ENCODE measurements at regions of chr12 and their contacts with region 1.

Region 1: DNA sequence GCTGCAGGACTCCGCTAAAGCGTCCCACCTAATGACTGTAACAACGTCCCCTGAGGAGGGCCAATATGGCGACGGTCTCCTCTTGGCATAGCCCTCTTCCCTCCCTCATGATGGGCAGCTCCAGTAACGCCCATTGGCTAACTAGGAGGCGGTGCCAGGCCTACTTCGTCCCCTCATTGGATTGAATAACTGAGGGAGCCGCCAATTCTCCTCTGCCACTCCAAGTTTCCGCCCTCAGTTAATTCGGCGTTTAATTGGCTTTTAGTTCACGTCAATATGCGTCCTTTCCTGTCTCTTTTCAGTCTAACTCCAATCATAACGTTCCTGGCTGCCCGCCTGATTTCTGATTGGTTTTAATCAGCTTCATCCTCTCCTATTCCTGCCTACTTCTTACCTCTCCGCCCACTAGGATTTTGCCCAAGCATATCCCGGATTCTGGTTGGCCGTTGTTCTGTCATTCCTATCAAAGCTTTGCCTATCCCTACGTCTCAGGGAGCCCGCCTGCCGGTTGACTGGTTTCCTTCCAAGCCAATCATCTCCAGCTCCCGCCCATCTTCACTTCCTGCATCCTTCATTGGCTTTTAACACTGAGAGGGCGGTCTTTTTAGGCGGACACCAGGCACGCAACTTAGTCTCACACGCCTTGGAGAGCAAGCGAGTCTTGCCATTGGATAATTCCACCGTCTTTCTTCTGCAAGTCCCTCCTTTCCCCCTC is 430 bp upstream of the SP1 start:
- DNase-seq: peak; percentile 98 to 100 (median 99)
- H3K4me3 ChIP-seq: peak overlapping the region; percentile 77
- H3K27ac ChIP-seq: peak overlapping the region; percentile 91 to 98
- H3K4me1 ChIP-seq: peaks cover 19% of the 10 kb centered on the region
- H3K27me3 ChIP-seq: no peaks in the 10 kb centered on the region
- CTCF ChIP-seq: no peak
- EP300 ChIP-seq: no peak
- POLR2A ChIP-seq: peak; percentile 96

Region 2: DNA sequence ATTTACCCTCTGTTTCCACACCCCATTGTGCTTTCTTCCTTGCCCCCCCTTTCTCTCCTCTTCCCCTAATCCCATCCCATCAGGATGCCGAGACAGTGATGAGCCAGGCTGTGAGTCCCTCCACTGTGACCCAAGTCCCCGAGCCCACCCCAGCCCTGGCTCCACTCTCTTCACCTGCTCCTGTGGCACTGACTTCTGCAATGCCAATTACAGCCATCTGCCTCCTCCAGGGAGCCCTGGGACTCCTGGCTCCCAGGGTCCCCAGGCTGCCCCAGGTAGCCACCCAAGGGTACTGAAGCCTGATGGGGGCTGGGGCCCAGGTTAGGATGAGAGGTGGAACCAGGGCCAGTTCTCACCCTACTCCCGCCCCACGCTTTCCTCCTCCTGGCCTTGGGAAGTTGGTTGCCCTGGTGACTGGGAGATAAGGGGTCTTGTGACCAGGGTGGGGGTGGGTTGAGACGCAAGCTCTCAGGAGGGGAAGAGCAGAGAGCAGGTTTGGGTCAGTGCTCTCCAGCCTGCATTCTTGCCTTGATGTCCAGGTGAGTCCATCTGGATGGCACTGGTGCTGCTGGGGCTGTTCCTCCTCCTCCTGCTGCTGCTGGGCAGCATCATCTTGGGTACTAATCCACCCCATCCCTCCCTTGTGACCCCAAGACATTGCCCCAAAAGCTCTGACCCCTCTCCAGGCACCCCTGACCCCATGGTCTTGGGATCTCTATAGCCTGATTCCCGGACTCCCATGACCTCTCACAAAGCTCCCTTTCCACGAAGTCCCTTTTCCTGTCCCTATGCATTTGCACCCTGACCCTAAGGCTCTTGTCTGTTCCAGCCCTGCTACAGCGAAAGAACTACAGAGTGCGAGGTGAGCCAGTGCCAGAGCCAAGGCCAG is 45.3 kb after region 1 on chr12:
- intact Hi-C with region 1: loop called in 1 of 4 experiments (anchors 5 kb)
- DNase-seq: peak; percentile 80 to 87 (median 83)
- H3K4me3 ChIP-seq: peak overlapping the region; percentile 1
- H3K27ac ChIP-seq: peak overlapping the region; percentile 64 to 85
- H3K4me1 ChIP-seq: peaks cover 21% of the 10 kb centered on the region
- H3K27me3 ChIP-seq: no peaks in the 10 kb centered on the region
- CTCF ChIP-seq: no peak
- EP300 ChIP-seq: no peak
- POLR2A ChIP-seq: peak; percentile 35

Measured in ovary (tissue), 10 donors.